Left ventricle myocardium superior (tissue), 1 donor: ENCODE measurements at regions of chr1 and their contacts with region 1.

Region 1: GRCh38 chr1:4594286-4594991 is 60.0 kb upstream of the AJAP1 start:
- DNase-seq: no peak
- ATAC-seq: no peak

Region 2: GRCh38 chr1:4425892-4426291 is 168.5 kb before region 1 on chr1:
- intact Hi-C with region 1: loop called (anchors 10 kb)
- DNase-seq: no peak
- ATAC-seq: no peak

Region 3: GRCh38 chr1:4573528-4573927 is 20.9 kb before region 1 on chr1:
- intact Hi-C with region 1: no loop called
- DNase-seq: no peak
- ATAC-seq: no peak